GM12878 (cell line): ENCODE measurements at regions of chr4 and their contacts with region 1.

Region 1: DNA sequence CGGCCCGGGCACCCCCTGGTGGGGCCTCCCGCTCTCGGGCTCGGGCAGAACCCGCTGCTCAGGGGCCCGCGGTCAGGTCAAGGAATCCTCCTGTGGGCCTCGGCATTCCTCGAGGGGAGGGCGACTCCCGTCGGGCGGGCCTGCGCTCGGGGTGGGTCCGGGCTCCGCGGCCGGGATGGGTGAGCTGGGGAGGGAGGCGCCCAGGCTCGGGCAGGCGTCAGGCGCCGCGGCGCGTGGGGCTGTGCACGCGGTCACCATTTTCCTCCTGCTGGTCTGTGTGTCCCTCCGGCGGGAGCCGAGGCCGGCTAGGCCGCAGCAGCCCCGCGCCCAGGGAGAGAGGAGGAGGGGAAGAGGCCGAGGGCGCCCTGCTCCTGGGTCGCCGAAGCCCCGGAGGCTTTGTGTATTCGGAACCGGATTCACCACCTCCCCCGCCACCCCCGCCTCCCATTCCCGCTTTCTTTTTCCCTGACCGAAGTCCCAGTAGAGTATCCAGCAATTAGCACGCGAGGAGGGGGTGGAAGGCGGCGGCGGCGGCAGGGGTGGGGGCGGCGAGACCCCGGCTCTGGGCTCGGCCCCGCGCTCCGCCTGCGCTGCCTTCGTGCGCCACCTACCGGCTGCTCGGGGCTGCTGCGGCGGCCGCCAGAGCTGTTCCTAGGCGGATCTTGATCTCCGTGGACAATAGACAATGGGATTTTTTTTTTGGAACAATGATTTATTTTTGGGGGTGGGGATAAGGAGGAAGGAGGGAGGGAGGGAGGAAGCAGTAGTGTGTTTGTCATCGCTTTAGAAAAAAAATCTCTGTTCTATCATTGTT is 99.0 kb upstream of the MAML3 start:
- DNase-seq: no peak
- ATAC-seq: peak; percentile 92
- H3K4me3 ChIP-seq: peak overlapping the region; percentile 33; the same call in 1 of the 2 replicates
- H3K27ac ChIP-seq: no peak overlapping the region
- H3K4me1 ChIP-seq: no peaks in the 10 kb centered on the region
- H3K27me3 ChIP-seq: peaks cover 10 to 19% of the 10 kb centered on the region in 2 experiments
- CTCF ChIP-seq: peak; percentile 80 to 88 (median 83)
- EP300 ChIP-seq: no peak
- POLR2A ChIP-seq: no peak
- RAD21 ChIP-seq: peak; percentile 84

Region 2: GRCh38 chr4:139603576-139604387 is 649.2 kb before region 1 on chr4:
- CTCF ChIA-PET with region 1: interaction called, 14 read pairs
- POLR2A ChIA-PET with region 1: no interaction called
- RAD21 ChIA-PET with region 1: interaction called, 5 read pairs
- SMC1A ChIA-PET with region 1: no interaction called
- in situ Hi-C with region 1: no loop called
- intact Hi-C with region 1: loop called (anchors 2 kb)
- DNase-seq: peak; percentile 8
- ATAC-seq: peak; percentile 72
- H3K4me3 ChIP-seq: no peak overlapping the region
- H3K27ac ChIP-seq: no peak overlapping the region
- H3K4me1 ChIP-seq: no peaks in the 10 kb centered on the region
- H3K27me3 ChIP-seq: peaks cover 0 to 2% of the 10 kb centered on the region in 2 experiments; a peak in 1 of 4 replicates
- CTCF ChIP-seq: peak; percentile 46 to 61 (median 57)
- EP300 ChIP-seq: no peak
- POLR2A ChIP-seq: no peak
- RAD21 ChIP-seq: peak; percentile 75

Region 3: GRCh38 chr4:139656614-139657486 is 596.1 kb before region 1 on chr4:
- CTCF ChIA-PET with region 1: interaction called, 9 read pairs
- POLR2A ChIA-PET with region 1: no interaction called
- RAD21 ChIA-PET with region 1: interaction called, 3 read pairs
- SMC1A ChIA-PET with region 1: no interaction called
- in situ Hi-C with region 1: no loop called
- intact Hi-C with region 1: loop called (anchors 2 kb)
- DNase-seq: no peak
- ATAC-seq: peak; percentile 93
- H3K4me3 ChIP-seq: no peak overlapping the region
- H3K27ac ChIP-seq: no peak overlapping the region
- H3K4me1 ChIP-seq: no peaks in the 10 kb centered on the region; the same call in 1 of the 2 replicates
- H3K27me3 ChIP-seq: 0 out of 4 replicates have a peak, but pooled peaks cover 0 to 3% of the 10 kb centered on the region in 2 experiments
- CTCF ChIP-seq: peak; percentile 69 to 84 (median 73)
- EP300 ChIP-seq: no peak
- POLR2A ChIP-seq: no peak
- RAD21 ChIP-seq: peak; percentile 17; the same call in 1 of the 2 replicates

Region 4: DNA sequence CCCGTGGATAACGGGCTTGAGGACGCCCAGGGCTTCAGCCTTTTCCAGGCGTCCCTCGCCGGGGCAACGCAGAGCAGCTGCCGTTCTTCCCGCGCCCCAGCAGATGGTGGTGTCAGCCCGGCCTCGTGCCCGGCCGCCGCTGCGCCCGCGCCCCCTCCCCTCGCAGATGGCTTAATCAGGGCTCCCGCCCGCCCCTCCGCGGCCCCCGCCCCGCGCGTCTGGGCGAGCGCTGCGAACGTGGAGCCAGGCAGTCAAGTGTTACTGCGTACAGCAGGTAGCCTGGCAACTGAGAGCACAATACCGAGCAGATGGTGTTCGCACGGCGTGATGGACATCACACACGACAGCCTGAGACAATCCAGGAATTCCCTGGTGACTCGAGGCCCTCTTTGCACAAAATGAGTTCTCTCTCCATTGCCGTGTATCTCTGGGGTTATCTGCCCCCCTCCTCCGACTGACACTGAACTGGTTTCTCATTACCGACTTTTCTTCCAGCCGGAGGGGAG is 518.0 kb before region 1 on chr4:
- CTCF ChIA-PET with region 1: interaction called, 3 read pairs
- POLR2A ChIA-PET with region 1: no interaction called
- RAD21 ChIA-PET with region 1: interaction called, 4 read pairs
- SMC1A ChIA-PET with region 1: no interaction called
- in situ Hi-C with region 1: no loop called
- intact Hi-C with region 1: loop called (anchors 5 kb)
- DNase-seq: no peak
- ATAC-seq: peak; percentile 84
- H3K4me3 ChIP-seq: no peak overlapping the region
- H3K27ac ChIP-seq: no peak overlapping the region
- H3K4me1 ChIP-seq: no peaks in the 10 kb centered on the region
- H3K27me3 ChIP-seq: peaks cover 6 to 24% of the 10 kb centered on the region in 2 experiments
- CTCF ChIP-seq: peak; percentile 17 to 49 (median 49); a peak in 5 of 6 replicates
- EP300 ChIP-seq: no peak
- POLR2A ChIP-seq: no peak
- RAD21 ChIP-seq: peak; percentile 47

Region 5: DNA sequence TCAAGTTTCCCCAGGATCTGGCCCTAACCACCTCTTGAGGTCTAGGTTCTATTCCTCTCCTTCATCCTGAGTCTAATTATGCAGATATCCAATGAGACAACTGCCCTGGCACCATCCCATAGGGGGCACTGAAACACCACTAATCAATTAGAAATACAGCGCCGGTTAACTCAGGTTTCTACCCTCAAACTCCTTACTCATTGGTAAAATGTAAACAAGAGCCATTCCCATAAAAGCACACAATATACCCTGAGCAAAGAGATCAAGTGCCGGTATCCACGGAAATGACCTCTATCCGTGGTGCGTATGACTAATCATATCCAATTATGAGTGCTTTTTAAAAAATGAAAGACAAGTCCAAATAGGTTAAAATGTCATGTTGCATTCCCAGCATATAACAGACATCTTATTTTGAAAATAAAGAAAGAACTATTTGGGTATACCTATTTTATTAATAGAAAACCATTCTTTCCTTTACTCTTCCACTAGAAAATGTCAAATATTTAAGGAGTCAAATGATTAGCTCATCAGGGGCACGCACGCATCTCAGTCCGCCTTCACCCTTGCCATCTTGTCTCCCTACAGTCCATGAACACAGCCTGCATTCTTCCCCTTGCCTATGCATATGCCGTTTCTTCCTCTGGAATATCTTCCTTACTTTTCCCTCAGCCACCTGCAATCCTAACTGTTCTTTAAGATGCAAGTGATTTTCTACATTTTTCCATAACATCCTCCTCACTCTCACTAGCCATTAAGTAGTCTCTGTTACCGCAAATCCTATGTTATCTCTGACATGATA is 240.1 kb before region 1 on chr4:
- CTCF ChIA-PET with region 1: interaction called, 7 read pairs
- POLR2A ChIA-PET with region 1: no interaction called
- RAD21 ChIA-PET with region 1: interaction called, 7 read pairs
- SMC1A ChIA-PET with region 1: interaction called, 4 read pairs
- in situ Hi-C with region 1: no loop called
- intact Hi-C with region 1: loop called (anchors 1 kb)
- DNase-seq: no peak
- ATAC-seq: peak; percentile 78
- H3K4me3 ChIP-seq: no peak overlapping the region
- H3K27ac ChIP-seq: no peak overlapping the region
- H3K4me1 ChIP-seq: no peaks in the 10 kb centered on the region
- H3K27me3 ChIP-seq: peaks cover 2 to 7% of the 10 kb centered on the region in 2 experiments; a peak in 3 of 4 replicates
- CTCF ChIP-seq: peak; percentile 27 to 46 (median 40); a peak in 4 of 6 replicates
- EP300 ChIP-seq: no peak
- POLR2A ChIP-seq: no peak
- RAD21 ChIP-seq: peak; percentile 57

Region 6: GRCh38 chr4:140049024-140049848 is 203.7 kb before region 1 on chr4:
- CTCF ChIA-PET with region 1: interaction called, 16 read pairs
- POLR2A ChIA-PET with region 1: no interaction called
- RAD21 ChIA-PET with region 1: interaction called, 14 read pairs
- SMC1A ChIA-PET with region 1: interaction called, 6 read pairs
- in situ Hi-C with region 1: no loop called
- intact Hi-C with region 1: loop called (anchors 2 kb)
- DNase-seq: no peak
- ATAC-seq: peak; percentile 61
- H3K4me3 ChIP-seq: no peak overlapping the region
- H3K27ac ChIP-seq: no peak overlapping the region
- H3K4me1 ChIP-seq: peaks cover 4% of the 10 kb centered on the region; the same call in 1 of the 2 replicates
- H3K27me3 ChIP-seq: peaks cover 0 to 9% of the 10 kb centered on the region in 2 experiments; a peak in 2 of 4 replicates
- CTCF ChIP-seq: peak in 1 of 3 experiments; percentile 14; a peak in 1 of 6 replicates
- EP300 ChIP-seq: no peak
- POLR2A ChIP-seq: no peak
- RAD21 ChIP-seq: 0 out of 2 replicates have a peak, but pooled peaks have one; percentile 8

Region 7: DNA sequence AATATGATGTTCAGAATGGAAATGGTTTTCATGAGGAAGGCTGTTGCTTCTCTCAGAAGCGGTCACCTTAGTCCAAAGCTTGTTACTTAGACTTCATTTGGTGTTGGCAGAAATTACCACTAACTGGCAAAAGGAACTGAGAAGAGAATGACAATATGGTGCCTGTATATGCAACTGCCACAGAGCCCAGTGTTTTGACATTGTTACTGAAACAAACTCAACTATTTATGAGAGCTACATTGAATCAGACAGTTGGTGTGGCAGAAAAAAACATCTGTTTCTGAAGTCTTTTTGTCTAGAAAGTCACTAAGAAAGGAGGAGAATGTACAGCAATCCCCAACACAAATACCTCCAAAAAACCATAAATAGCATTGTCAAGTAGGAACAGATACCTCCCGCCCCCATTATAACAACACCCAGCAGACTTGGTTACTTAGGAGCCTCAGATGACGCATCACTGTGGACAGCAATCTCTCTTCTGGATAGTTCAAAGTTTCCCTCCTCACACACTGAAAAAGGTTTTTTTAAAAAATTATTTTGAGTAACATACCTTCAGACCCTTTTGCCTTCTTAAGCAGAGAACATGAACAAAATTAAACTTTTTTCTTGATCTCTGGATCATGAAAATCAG is 191.2 kb before region 1 on chr4:
- CTCF ChIA-PET with region 1: no interaction called
- POLR2A ChIA-PET with region 1: no interaction called
- RAD21 ChIA-PET with region 1: no interaction called
- SMC1A ChIA-PET with region 1: no interaction called
- in situ Hi-C with region 1: no loop called
- intact Hi-C with region 1: no loop called
- DNase-seq: no peak
- ATAC-seq: no peak
- H3K4me3 ChIP-seq: no peak overlapping the region
- H3K27ac ChIP-seq: no peak overlapping the region
- H3K4me1 ChIP-seq: no peaks in the 10 kb centered on the region
- H3K27me3 ChIP-seq: 0 out of 4 replicates have a peak, but pooled peaks cover 0 to 4% of the 10 kb centered on the region in 2 experiments
- CTCF ChIP-seq: no peak
- EP300 ChIP-seq: no peak
- POLR2A ChIP-seq: no peak
- RAD21 ChIP-seq: no peak

Region 8: DNA sequence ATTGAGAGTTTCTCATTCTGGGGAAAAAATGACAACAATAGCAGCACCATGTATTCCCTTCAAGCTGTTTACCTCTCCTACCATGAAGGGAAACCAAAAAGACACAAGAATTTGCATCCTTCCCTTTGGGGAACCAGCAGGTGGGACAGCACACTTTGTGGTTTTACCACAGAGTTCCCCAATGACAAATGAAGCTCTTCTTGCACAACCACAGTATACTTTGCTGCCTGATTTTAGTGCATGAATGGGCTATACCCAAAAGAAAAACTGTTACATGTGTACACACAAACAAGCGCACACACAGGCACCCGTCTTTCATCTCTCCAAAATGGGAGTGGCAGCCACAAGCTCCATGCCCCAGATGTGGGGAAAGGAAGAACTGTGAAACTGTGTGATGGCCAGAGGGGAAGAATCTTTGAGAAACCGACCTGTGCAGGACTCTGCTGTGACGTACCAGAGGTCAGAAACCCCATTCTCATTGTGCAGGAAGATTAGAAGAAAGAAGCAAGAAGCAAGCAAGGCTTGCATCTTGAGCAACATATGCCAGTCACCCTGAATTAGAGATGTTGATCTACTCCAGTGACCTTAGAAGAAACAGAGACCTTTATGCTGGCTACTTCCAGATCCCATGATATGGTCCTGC is 96.3 kb before region 1 on chr4:
- CTCF ChIA-PET with region 1: no interaction called
- POLR2A ChIA-PET with region 1: no interaction called
- RAD21 ChIA-PET with region 1: no interaction called
- SMC1A ChIA-PET with region 1: no interaction called
- in situ Hi-C with region 1: no loop called
- intact Hi-C with region 1: loop called (anchors 5 kb)
- DNase-seq: peak; percentile 24
- ATAC-seq: peak; percentile 13
- H3K4me3 ChIP-seq: no peak overlapping the region
- H3K27ac ChIP-seq: no peak overlapping the region
- H3K4me1 ChIP-seq: 0 out of 2 replicates have a peak, but pooled peaks cover 4% of the 10 kb centered on the region
- H3K27me3 ChIP-seq: peaks cover 7 to 20% of the 10 kb centered on the region in 2 experiments
- CTCF ChIP-seq: no peak
- EP300 ChIP-seq: no peak
- POLR2A ChIP-seq: no peak
- RAD21 ChIP-seq: no peak